OCI-LY7 (cell line): ENCODE measurements at regions of chr1 and their contacts with region 1.

Region 1: DNA sequence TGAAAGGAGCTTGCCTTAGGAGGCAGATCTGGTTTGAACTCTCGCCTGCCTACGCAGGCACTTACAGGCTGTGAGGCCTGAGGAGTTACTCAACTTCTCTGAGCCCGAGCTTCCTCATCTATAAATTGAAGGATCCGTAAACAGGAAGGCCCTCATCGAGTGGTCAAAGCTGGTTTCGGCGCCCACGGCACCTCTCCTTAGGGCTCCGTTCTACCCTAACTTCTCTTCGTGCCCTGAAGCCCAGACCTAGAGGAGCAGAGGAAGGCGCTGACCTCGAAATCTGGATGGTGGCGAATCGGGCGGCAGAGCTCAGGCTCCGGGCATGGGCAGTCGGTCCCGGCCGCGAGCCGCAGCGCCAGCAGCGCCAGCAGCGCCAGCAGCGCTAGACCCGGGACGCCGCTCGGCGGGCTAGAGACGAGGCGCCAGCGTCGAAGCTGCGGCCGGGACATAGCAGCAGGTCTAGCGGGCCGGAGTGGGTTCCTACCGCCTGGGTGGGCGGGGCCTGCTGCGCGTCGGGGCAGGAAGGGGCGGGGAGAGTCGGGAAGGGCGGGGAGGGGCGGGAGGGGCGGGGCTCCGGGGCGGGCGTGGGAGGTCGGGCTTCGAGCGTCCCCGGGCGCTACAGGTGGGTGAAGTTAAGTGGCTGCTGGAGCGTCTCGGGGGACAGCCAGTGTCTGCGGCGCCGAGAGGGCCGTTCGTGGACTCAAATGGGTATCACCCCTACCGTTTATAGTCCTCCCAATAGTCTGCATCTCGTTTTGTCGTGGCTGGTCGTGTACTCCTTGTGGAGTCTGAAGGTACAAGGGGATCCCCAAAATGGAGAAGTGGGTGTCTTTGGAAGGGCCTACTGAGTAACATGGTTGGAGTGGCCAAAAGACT is at the start of gene CTBS:
- DNase-seq: peak; percentile 95
- H3K4me3 ChIP-seq: peak within 1 kb of the TSS; percentile 72
- H3K27ac ChIP-seq: peak within 1 kb of the TSS; percentile 81
- H3K4me1 ChIP-seq: peaks cover 20% of the 10 kb centered on the region
- CTCF ChIP-seq: no peak
- total RNA-seq, gene CTBS: 4.5 and 5.9 TPM in 2 replicates

Region 2: DNA sequence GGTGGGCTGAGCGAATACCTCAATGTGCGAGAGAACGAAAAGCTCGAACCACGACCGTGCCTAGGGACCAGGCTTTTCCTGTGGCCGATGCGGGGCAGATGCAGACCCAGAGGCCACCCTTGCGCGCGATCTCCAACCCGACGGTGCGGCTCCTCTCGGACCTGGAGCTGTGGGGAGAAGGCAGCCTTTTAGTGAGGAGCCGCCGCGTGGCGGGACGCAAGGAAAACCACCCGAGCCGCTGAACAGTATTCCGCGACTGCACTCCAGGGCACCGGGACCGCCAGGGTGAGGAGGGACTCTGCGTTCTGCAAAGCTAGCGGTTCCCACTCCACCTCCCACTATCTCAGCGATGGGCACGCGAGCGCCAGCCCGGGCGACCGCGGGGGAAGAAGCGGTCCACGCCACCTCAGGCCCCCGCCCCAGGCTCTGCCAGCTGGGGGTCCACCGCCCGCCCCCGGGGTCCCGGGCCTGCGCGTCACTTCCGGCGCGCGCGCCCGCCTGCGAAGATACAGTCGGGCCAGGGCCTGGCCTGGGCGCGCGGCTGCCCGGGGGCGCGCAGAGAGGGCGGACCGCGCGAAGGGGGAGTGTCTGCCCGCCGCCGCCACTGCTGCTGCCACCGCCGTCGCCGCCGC is 496.6 kb before region 1 on chr1:
- CTCF ChIA-PET with region 1: no interaction called
- POLR2A ChIA-PET with region 1: interaction called, 7 read pairs
- intact Hi-C with region 1: loop called (anchors 5 kb)
- DNase-seq: peak; percentile 89
- H3K4me3 ChIP-seq: peak overlapping the region; percentile 80
- H3K27ac ChIP-seq: peak overlapping the region; percentile 32
- H3K4me1 ChIP-seq: peaks cover 15% of the 10 kb centered on the region
- CTCF ChIP-seq: no peak

Region 3: DNA sequence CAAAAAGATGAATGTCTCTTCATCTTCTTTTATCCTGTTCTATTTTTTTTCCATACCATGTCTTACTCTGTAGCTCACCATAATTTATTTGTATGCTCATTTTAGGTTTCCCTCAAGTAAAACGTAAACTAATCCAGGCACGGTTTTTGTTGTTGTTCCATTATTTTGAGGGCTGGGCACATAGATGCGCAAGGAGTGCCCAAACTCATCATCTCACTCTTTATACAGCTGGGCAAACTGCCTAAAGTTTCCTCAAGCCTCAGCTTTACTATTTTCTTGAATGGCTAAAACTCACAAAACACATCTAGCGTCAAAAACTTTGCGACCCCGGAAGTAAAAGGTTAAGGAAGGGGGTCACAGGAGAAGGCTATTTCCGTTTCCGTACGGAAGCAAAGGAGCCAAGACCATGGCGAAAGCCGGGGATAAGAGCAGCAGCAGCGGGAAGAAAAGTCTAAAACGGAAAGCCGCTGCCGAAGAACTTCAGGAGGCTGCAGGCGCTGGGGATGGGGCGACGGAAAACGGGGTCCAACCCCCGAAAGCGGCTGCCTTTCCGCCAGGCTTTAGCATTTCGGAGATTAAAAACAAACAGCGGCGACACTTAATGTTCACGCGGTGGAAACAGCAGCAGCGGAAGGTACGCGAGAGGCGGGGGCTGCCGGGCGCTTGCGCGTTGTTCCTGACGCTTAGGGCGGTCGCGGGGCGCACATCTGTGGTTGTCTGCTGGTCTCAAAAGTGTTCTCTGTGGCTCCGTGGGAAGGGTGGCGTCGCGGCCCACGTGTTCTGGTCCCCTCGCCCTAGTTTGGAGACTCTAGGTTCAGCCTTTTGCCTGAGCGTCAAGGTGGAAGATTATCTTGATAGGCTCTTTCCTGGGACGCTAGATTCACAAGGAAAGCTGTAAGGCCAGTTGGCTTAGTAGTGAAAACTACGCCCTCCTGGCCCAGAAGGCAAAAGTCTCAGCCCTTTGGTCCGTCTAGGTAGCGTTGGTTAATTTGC is 95.0 kb before region 1 on chr1 and contains the start of gene RPF1:
- CTCF ChIA-PET with region 1: interaction called, 3 read pairs
- POLR2A ChIA-PET with region 1: interaction called, 5 read pairs
- intact Hi-C with region 1: loop called (anchors 2 kb)
- DNase-seq: peak; percentile 88
- H3K4me3 ChIP-seq: peak within 1 kb of the TSS; percentile 77
- H3K27ac ChIP-seq: peak within 1 kb of the TSS; percentile 63
- H3K4me1 ChIP-seq: peaks cover 21% of the 10 kb centered on the region
- CTCF ChIP-seq: peak; percentile 23; the same call in 1 of the 2 replicates
- total RNA-seq, gene RPF1: 56.3 and 57.9 TPM in 2 replicates

Region 4: DNA sequence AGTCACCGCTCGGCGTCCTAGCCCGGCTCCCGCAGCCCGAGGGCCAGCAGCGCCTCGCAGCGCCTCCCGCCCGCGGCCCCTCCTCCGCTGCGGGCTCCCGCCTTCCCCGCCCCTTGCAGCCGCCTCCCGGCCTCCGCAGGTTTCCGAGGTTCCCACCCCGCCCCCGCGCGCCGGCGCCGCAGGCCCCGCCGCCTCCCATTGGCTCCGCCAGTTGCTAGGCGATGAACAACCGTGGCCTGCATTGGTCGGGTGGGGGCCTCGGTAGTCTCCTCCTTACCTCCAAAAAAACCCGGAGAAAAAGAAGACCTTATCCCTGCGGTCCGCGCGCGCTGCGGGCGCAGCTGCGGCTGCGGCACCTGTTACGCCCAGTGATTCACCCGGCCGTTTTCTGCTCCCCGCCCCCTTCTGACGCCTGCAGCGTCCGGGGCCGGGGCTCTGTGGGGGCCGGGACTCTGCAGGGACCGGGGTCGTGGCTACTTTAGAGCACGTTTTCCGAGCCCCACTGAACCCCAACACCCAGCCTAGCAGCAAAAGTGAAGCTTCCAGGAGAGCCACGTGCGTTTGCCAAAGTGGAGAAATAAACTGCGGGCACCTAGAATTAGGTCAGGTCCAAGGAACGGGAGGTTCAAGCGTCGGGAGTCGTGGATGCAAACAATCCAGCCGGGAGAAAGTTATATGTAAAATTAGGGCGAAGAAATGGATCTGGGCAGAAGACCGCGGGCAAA is 116.4 kb after region 1 on chr1 and contains the start of gene SSX2IP:
- CTCF ChIA-PET with region 1: no interaction called
- POLR2A ChIA-PET with region 1: interaction called, 7 read pairs
- intact Hi-C with region 1: loop called (anchors 5 kb)
- DNase-seq: peak; percentile 97
- H3K4me3 ChIP-seq: peak within 1 kb of the TSS; percentile 84
- H3K27ac ChIP-seq: peak within 1 kb of the TSS; percentile 77
- H3K4me1 ChIP-seq: peaks cover 48% of the 10 kb centered on the region
- CTCF ChIP-seq: no peak
- total RNA-seq, gene SSX2IP: 24.1 and 29.9 TPM in 2 replicates

Region 5: GRCh38 chr1:85894651-85895050 is 1320.4 kb after region 1 on chr1:
- CTCF ChIA-PET with region 1: no interaction called
- POLR2A ChIA-PET with region 1: no interaction called
- intact Hi-C with region 1: no loop called
- DNase-seq: peak; percentile 23
- H3K4me3 ChIP-seq: no peak overlapping the region
- H3K27ac ChIP-seq: no peak overlapping the region
- H3K4me1 ChIP-seq: no peaks in the 10 kb centered on the region
- CTCF ChIP-seq: peak; percentile 76